Calu3 (cell line): ENCODE measurements at regions of chr1 and their contacts with region 1.

Region 1: DNA sequence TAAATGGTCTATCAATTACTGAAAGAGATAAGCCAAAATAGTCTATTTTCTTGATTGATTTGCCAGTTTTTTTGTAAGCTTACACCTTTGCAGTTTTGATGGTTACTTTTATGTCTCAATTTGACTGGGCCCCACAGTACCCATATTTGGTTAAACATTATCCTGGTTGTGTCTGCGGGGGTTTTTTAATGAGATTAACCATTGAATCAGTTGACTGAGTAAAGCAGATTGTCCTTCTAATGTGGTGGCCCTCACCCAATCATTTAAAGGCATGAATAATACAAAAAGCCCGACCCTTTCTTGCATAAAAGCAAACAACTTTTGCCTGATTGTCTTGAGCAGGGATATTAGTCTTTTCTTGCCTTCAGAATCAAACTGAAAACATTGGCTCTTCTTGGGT is 650.0 kb upstream of the RGS18 start:
- DNase-seq: no peak
- H3K4me3 Mint-ChIP-seq: no peak overlapping the region
- H3K27ac Mint-ChIP-seq: no peak overlapping the region
- H3K4me1 Mint-ChIP-seq: peaks cover 11% of the 10 kb centered on the region
- H3K27me3 Mint-ChIP-seq: no peaks in the 10 kb centered on the region
- CTCF ChIP-seq: no peak

Region 2: DNA sequence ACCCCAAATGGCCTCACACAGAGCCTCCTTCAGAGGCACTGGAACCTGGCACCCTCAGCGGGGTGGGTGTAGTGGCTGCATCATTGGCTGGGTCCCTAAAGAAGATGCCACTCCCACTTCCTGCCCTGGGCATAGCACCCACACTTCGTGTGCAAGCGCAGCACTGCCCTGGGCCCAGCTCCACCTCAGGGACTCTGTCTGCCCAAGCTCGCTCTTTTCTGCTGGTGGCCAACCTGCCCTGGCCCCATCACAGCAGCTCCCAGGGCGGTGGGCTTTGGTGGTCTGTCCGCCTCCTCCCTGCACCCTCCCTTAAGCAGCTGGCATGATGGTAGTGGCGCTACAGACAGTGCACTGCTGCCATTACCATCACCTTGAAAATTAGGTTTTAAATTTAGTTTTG is 201.3 kb before region 1 on chr1:
- CTCF ChIA-PET with region 1: no interaction called
- intact Hi-C with region 1: no loop called
- DNase-seq: no peak
- H3K4me3 Mint-ChIP-seq: no peak overlapping the region
- H3K27ac Mint-ChIP-seq: no peak overlapping the region
- H3K4me1 Mint-ChIP-seq: no peaks in the 10 kb centered on the region
- H3K27me3 Mint-ChIP-seq: no peaks in the 10 kb centered on the region
- CTCF ChIP-seq: no peak

Region 3: GRCh38 chr1:191558379-191558778 is 50.1 kb after region 1 on chr1:
- CTCF ChIA-PET with region 1: no interaction called
- intact Hi-C with region 1: loop called (anchors 10 kb)
- DNase-seq: no peak
- H3K4me3 Mint-ChIP-seq: no peak overlapping the region
- H3K27ac Mint-ChIP-seq: no peak overlapping the region
- H3K4me1 Mint-ChIP-seq: no peaks in the 10 kb centered on the region
- H3K27me3 Mint-ChIP-seq: no peaks in the 10 kb centered on the region
- CTCF ChIP-seq: no peak